CD4-positive, alpha-beta T cell (primary cell): ENCODE measurements at regions of chr11 and their contacts with region 1.

Region 1: GRCh38 chr11:66069715-66070603 is at the start of gene PACS1:
- DNase-seq: peak; percentile 54 to 92 (median 73)
- ATAC-seq: peak; percentile 67
- H3K4me3 ChIP-seq: peak within 1 kb of the TSS; percentile 87
- H3K4me3 Mint-ChIP-seq: peak within 1 kb of the TSS; percentile 96
- H3K27ac ChIP-seq: peak within 1 kb of the TSS; percentile 81 to 85
- H3K27ac Mint-ChIP-seq: peak within 1 kb of the TSS; percentile 94
- H3K4me1 ChIP-seq: peaks cover 41% of the 10 kb centered on the region
- H3K4me1 Mint-ChIP-seq: peaks cover 73% of the 10 kb centered on the region
- H3K27me3 ChIP-seq: no peaks in the 10 kb centered on the region
- H3K27me3 Mint-ChIP-seq: no peaks in the 10 kb centered on the region
- CTCF ChIP-seq: no peak
- total RNA-seq, gene PACS1: 179 to 183 TPM

Region 2: DNA sequence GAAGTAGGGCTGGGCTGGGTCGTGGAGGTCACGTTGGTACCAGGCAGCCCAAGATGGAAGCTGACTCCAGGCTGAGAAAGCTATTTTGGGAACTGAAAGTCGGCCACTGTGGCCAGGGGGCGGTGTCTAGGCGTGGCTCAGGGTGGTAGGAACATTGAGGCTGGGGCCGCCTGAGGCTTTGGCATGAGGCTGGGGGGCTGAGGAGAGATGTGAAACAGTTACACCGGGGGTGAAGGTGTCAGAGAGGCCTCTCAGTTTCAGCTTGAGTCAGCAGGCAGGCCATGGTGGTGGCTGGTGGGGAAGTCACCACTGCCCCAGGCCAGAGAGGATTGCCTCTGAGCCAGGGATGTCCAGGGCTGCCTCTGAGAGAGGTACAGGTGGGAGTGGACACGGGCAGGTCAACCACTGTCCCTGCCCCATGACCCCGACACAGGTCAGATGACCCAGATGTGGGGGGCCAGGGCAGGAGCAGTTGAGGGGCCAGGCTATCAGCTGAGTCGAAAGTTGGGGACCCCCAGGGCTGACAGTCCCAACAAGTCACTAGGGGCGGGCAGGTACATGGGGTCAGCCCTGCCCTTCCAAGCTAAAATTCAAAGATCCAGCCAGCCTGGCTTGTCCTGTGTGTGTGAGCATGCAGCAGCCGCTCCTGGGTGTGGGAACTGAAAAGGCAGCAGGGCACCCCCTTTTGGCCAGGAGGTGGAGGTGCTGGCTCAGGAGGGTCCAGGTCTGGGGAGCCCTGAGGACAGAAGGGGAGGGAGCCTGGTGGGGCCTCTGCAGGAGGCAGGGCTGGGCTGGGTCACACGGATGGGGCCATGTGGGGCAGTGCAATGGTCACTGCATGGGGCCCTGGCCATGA is 481.5 kb before region 1 on chr11:
- CTCF ChIA-PET with region 1: no interaction called
- POLR2A ChIA-PET with region 1: no interaction called
- intact Hi-C with region 1: no loop called
- DNase-seq: peak; percentile 63 to 90 (median 74)
- ATAC-seq: peak; percentile 99
- H3K4me3 ChIP-seq: no peak overlapping the region
- H3K4me3 Mint-ChIP-seq: no peak overlapping the region
- H3K27ac ChIP-seq: peak overlapping the region; percentile 1 to 60
- H3K27ac Mint-ChIP-seq: peak overlapping the region; percentile 21
- H3K4me1 ChIP-seq: peaks cover 33% of the 10 kb centered on the region
- H3K4me1 Mint-ChIP-seq: peaks cover 17% of the 10 kb centered on the region
- H3K27me3 ChIP-seq: no peaks in the 10 kb centered on the region
- H3K27me3 Mint-ChIP-seq: no peaks in the 10 kb centered on the region
- CTCF ChIP-seq: peak; percentile 70

Region 3: GRCh38 chr11:66045177-66045639 is 24.8 kb before region 1 on chr11:
- CTCF ChIA-PET with region 1: interaction called, 10 read pairs
- POLR2A ChIA-PET with region 1: interaction called, 3 read pairs
- intact Hi-C with region 1: no loop called
- DNase-seq: peak; percentile 72 to 92 (median 82)
- ATAC-seq: peak; percentile 98
- H3K4me3 ChIP-seq: no peak overlapping the region
- H3K4me3 Mint-ChIP-seq: no peak overlapping the region
- H3K27ac ChIP-seq: no peak overlapping the region
- H3K27ac Mint-ChIP-seq: no peak overlapping the region
- H3K4me1 ChIP-seq: peaks cover 26% of the 10 kb centered on the region
- H3K4me1 Mint-ChIP-seq: peaks cover 17% of the 10 kb centered on the region
- H3K27me3 ChIP-seq: no peaks in the 10 kb centered on the region
- H3K27me3 Mint-ChIP-seq: peaks cover 5% of the 10 kb centered on the region
- CTCF ChIP-seq: peak; percentile 91

Region 4: DNA sequence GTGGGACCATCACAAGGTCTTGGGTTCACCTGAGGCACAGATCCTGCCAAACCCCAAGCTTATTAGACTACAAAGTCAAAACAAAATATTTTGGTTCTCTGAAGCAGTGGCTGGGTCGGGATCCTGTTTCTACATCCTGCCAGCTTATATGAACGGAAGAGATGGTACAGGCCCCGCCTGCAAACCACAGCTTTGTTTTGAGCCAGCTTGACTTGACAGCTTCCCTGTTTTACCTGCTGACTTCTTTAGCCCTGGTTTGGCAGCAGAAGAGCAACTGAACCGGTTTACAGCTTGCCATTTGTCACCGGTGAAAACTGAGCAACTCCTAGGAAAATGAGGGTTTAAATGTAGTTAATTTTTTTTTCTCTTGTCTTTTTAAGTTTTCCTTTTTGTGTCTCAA is 11.5 kb after region 1 on chr11:
- CTCF ChIA-PET with region 1: interaction called, 29 read pairs
- POLR2A ChIA-PET with region 1: interaction called, 135 read pairs
- intact Hi-C with region 1: loop called in 1 of 2 experiments (anchors 1 kb)
- DNase-seq: peak; percentile 62 to 92 (median 79)
- ATAC-seq: peak; percentile 93
- H3K4me3 ChIP-seq: peak overlapping the region; percentile 35
- H3K4me3 Mint-ChIP-seq: peak overlapping the region; percentile 88
- H3K27ac ChIP-seq: peak overlapping the region; percentile 80 to 94
- H3K27ac Mint-ChIP-seq: peak overlapping the region; percentile 88
- H3K4me1 ChIP-seq: peaks cover 87% of the 10 kb centered on the region
- H3K4me1 Mint-ChIP-seq: peaks cover 91% of the 10 kb centered on the region
- H3K27me3 ChIP-seq: no peaks in the 10 kb centered on the region
- H3K27me3 Mint-ChIP-seq: no peaks in the 10 kb centered on the region
- CTCF ChIP-seq: no peak

Region 5: DNA sequence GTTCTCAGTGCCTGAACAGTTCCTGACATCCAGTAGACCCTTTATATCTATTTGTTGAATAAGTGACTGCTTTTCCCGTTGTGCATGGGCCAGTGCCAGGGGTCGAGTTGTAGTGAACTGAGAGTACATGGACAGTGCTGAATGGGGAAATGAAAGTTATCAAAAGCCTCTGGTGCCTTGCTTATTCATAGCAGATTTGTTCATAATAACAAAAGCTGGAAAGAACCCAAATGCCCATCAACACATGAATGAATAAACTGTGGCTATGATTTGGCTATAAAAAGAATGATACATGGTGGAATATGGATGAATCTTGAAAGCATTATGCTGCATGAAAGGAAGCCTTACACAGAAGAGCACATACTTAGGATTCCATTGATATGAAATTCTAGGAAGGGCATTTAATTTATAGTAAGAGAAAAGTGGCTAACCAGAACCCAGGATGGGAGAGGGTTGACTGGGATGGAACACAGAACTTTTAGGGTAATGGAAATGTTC is 42.7 kb after region 1 on chr11:
- CTCF ChIA-PET with region 1: interaction called, 16 read pairs
- POLR2A ChIA-PET with region 1: interaction called, 76 read pairs
- intact Hi-C with region 1: loop called (anchors 2 to 5 kb)
- DNase-seq: peak in 1 of 14 experiments; percentile 34
- ATAC-seq: no peak
- H3K4me3 ChIP-seq: no peak overlapping the region
- H3K4me3 Mint-ChIP-seq: peak overlapping the region; percentile 50
- H3K27ac ChIP-seq: peak overlapping the region; percentile 57 to 66
- H3K27ac Mint-ChIP-seq: peak overlapping the region; percentile 83
- H3K4me1 ChIP-seq: peaks cover 79% of the 10 kb centered on the region
- H3K4me1 Mint-ChIP-seq: peaks cover 95% of the 10 kb centered on the region
- H3K27me3 ChIP-seq: no peaks in the 10 kb centered on the region
- H3K27me3 Mint-ChIP-seq: no peaks in the 10 kb centered on the region
- CTCF ChIP-seq: no peak

Region 6: DNA sequence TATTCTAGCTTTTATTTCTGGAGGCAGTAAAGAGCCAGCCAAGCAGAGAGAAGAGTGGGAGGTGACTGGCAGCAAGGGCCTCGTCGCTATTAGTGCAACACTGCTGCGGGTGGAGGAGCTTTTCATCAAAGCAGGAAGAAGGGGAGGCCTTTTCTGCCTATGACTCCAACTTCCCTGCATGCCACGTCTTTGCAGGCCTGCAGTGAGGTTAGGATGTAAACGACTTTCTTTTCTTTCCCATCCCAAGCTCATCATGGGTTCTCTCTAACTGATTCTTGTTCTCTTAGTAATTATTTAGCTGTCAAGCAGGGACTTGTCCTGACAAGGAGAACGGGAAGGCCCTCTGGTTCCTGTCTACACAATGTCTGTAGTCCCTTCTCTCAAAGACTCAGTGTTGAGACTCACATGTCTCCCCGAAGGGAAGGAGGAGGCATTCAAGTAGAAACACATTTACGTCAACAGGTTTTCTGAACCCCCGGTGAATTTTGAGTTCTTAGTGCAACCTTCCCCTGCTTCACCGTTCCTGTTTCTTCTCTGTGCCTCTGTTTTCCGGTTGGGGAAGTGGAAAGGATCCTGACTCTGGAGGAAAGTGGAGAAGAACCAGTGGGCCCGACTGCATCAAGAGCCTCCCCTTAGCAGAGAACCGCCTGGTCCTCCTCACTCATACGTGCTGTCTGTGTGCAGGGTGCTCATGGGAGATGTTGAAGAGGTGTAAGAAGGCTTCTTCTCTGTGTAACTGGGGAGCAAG is 57.0 kb after region 1 on chr11:
- CTCF ChIA-PET with region 1: interaction called, 10 read pairs
- POLR2A ChIA-PET with region 1: interaction called, 18 read pairs
- intact Hi-C with region 1: loop called in 1 of 2 experiments (anchors 2 kb)
- DNase-seq: peak; percentile 39 to 79 (median 62)
- ATAC-seq: peak; percentile 93
- H3K4me3 ChIP-seq: peak overlapping the region; percentile 16
- H3K4me3 Mint-ChIP-seq: peak overlapping the region; percentile 82
- H3K27ac ChIP-seq: peak overlapping the region; percentile 69 to 73
- H3K27ac Mint-ChIP-seq: peak overlapping the region; percentile 95
- H3K4me1 ChIP-seq: peaks cover 34% of the 10 kb centered on the region
- H3K4me1 Mint-ChIP-seq: peaks cover 82% of the 10 kb centered on the region
- H3K27me3 ChIP-seq: no peaks in the 10 kb centered on the region
- H3K27me3 Mint-ChIP-seq: no peaks in the 10 kb centered on the region
- CTCF ChIP-seq: no peak

Region 7: DNA sequence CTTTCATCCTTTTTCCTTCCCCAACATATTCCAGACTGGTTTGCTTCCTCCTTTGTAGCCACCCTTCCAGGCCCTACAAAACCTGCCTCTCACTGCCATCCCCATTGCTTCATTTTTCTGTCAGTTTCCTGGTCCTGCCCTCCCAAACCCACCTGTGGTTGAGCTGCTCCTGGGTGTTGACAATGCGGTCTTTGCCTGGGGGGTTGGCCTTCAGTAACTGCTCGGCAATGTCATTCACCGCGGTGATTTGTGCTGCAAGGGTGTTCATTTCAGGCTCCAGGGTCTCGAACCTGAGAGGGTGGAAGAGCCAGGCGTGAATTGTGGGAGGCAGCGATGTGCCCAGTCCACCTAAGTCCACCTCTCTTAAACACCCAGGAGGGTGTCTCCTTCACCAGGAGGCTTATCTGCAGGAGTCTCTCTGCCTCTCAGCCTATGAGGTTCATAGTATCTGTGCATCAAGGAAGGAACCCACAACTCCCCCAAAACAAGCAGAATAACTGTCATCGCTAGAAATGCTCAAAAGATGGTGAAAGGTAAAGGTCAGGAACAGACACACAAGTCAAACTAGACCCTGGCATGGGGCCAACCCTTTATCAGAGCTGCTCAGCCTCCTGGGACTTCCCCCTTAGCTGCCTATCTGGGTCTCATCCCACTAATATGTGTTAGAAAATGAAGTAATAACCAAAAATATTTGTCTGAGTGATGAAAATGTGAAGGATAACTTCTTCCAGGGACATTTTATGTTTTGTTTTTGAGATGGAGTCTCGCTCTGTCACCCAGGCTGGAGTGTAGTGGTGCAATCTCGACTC is 631.7 kb after region 1 on chr11:
- CTCF ChIA-PET with region 1: no interaction called
- POLR2A ChIA-PET with region 1: no interaction called
- intact Hi-C with region 1: no loop called
- DNase-seq: no peak
- ATAC-seq: no peak
- H3K4me3 ChIP-seq: no peak overlapping the region
- H3K4me3 Mint-ChIP-seq: no peak overlapping the region
- H3K27ac ChIP-seq: no peak overlapping the region
- H3K27ac Mint-ChIP-seq: no peak overlapping the region
- H3K4me1 ChIP-seq: no peaks in the 10 kb centered on the region
- H3K4me1 Mint-ChIP-seq: peaks cover 4% of the 10 kb centered on the region
- H3K27me3 ChIP-seq: no peaks in the 10 kb centered on the region
- H3K27me3 Mint-ChIP-seq: no peaks in the 10 kb centered on the region
- CTCF ChIP-seq: no peak